Activated T-helper 1 cell treated with anti-CD3 and anti-CD28 coated beads, Interleukin-12 subunit alpha, Interleukin-12 subunit beta, Interleukin-2, Interleukin-4 antibody, amounts not matched to agents 30 ng/mL and 10 ng/mL and 1 ng/mL, durations not matched to agents 14 hours and 24 hours and 36 hours (primary cell): ENCODE measurements at regions of chr6 and their contacts with region 1.

Region 1: DNA sequence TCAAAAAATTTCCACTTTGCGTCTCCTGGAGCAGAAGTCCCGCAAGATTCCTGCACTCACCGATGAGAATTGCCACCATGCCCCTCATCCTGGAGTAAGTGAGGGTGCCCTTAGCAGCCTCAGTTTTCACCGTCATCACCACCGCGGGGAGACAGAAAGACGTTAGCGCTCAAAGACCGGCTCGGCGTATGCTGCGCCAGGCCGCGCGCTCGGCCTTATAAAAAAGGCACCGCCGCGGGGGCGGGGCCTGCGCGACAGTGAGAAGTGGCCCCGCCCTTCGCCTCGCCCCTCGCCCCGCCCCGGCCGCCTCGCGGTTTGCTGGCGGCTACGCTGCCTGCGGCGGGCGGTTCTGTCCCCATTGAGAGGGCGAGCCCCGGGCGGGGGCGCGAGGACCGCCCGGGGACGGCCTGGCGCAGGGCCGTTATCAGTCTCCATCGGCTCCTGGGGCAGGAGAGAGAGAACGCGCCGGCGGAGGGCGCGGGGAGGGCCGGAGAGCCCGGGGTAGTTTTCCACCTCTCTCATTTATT is 122.3 kb upstream of the SLC2A12 start:
- DNase-seq: peak; percentile 89
- H3K4me3 Mint-ChIP-seq: peak overlapping the region; percentile 96
- H3K27ac Mint-ChIP-seq: peak overlapping the region; percentile 98
- H3K4me1 Mint-ChIP-seq: peaks cover 78% of the 10 kb centered on the region
- H3K27me3 Mint-ChIP-seq: no peaks in the 10 kb centered on the region

Region 2: GRCh38 chr6:134216301-134217010 is 41.7 kb after region 1 on chr6:
- intact Hi-C with region 1: no loop called
- DNase-seq: no peak
- H3K4me3 Mint-ChIP-seq: no peak overlapping the region
- H3K27ac Mint-ChIP-seq: no peak overlapping the region
- H3K4me1 Mint-ChIP-seq: no peaks in the 10 kb centered on the region
- H3K27me3 Mint-ChIP-seq: peaks cover 2% of the 10 kb centered on the region

Region 3: GRCh38 chr6:134247231-134247833 is 72.6 kb after region 1 on chr6:
- intact Hi-C with region 1: loop called (anchors 1 kb)
- DNase-seq: peak; percentile 82
- H3K4me3 Mint-ChIP-seq: peak overlapping the region; percentile 37
- H3K27ac Mint-ChIP-seq: peak overlapping the region; percentile 91
- H3K4me1 Mint-ChIP-seq: peaks cover 58% of the 10 kb centered on the region
- H3K27me3 Mint-ChIP-seq: no peaks in the 10 kb centered on the region

Region 4: DNA sequence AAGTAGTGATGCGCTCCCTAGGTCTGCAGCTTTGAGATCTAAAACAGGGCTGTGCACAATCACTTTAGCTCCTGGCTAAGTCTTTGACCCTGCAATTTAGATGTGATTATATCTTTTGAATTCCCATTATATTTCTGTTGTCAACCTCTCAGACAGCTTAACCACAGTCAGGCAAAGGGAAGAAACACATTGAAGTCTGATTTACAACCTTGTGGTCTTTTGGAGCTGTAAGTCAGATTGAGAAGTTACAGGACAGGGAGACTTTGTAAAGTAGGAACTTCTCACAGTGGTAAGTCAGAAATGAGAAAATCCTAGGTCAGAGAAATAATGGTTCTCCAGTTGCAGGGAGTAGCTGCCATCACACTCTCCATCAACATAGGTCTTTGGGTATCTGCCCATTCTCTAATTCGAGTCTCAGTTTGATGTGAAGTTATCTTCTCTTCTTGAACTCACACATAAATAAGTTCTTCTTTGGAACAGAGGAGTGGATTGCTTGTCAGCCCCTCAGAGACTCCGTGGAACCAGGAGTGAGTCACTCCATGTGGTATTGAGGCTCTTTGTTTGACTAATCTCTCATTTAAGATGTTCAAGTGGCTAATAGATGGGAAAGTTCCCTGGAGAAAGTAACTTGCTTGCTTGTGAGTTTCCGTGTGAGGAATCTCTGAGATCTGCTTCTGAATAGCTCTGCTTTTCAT is 178.2 kb after region 1 on chr6:
- intact Hi-C with region 1: loop called (anchors 2 kb)
- DNase-seq: no peak
- H3K4me3 Mint-ChIP-seq: peak overlapping the region; percentile 77
- H3K27ac Mint-ChIP-seq: peak overlapping the region; percentile 49
- H3K4me1 Mint-ChIP-seq: peaks cover 30% of the 10 kb centered on the region
- H3K27me3 Mint-ChIP-seq: no peaks in the 10 kb centered on the region

Region 5: GRCh38 chr6:134517145-134517658 is 342.5 kb after region 1 on chr6:
- intact Hi-C with region 1: loop called (anchors 5 kb)
- DNase-seq: no peak
- H3K4me3 Mint-ChIP-seq: no peak overlapping the region
- H3K27ac Mint-ChIP-seq: no peak overlapping the region
- H3K4me1 Mint-ChIP-seq: peaks cover 38% of the 10 kb centered on the region
- H3K27me3 Mint-ChIP-seq: no peaks in the 10 kb centered on the region

Region 6: GRCh38 chr6:134882426-134883038 is 707.8 kb after region 1 on chr6:
- intact Hi-C with region 1: loop called (anchors 1 kb)
- DNase-seq: peak; percentile 31
- H3K4me3 Mint-ChIP-seq: no peak overlapping the region
- H3K27ac Mint-ChIP-seq: no peak overlapping the region
- H3K4me1 Mint-ChIP-seq: no peaks in the 10 kb centered on the region
- H3K27me3 Mint-ChIP-seq: peaks cover 24% of the 10 kb centered on the region